PC-9 (cell line): ENCODE measurements at regions of chr6 and their contacts with region 1.

Region 1: DNA sequence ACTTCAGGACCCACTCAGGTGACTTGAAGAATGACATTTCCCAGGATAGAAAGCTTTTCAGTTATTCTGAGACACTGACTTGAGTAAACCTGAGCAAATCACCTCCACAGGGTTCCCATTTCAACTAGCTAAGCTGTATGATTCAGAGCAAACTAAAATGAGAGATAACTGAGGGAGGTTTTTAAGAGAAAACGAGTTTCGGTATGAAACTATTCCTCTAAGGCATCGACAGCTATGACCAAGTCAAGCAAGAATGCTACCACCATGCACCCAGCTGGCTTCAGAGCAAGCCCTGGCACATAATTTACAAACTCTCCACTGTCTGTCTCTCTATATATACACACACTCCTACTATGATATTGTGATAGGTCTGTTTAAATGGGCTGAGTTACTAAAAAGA is 75.4 kb downstream of the PERP start:
- DNase-seq: no peak
- H3K4me3 ChIP-seq: no peak overlapping the region
- H3K27ac ChIP-seq: no peak overlapping the region
- H3K4me1 ChIP-seq: peaks cover 32% of the 10 kb centered on the region
- H3K27me3 ChIP-seq: no peaks in the 10 kb centered on the region
- CTCF ChIP-seq: no peak

Region 2: DNA sequence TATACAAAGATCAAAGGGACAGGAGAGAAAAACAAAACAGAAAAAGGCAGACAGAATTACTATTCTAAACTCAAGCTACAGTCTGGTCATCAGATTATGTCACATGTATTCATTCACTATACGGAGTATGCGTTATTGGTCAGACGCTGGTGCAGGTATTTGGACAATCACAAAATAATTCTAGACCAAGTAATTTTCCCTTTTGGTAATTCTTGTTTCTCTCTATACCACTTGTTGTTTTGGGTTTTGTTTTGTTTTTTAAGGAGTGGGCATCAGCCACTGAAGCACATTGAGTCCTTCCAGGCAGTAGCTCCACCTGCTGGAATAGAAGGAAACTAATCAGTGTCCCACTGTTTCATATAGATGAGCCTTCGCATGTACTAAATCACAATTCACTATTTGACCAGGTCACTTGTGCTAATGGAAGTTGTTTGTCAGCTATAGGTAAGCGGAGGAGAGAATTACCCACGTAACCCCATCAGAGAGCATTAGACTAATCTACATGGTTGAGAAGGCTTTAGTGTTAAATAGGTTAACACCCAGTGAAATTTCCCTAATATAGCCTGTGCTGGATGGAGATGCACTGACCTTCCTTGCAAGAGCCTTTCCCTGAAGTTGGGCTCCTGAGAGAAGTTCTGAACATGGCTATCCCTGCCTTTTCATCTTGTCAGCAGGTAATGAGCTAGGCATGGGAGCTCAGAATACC is 86.9 kb before region 1 on chr6:
- CTCF ChIA-PET with region 1: no interaction called
- POLR2A ChIA-PET with region 1: no interaction called
- intact Hi-C with region 1: no loop called
- DNase-seq: no peak
- H3K4me3 ChIP-seq: no peak overlapping the region
- H3K27ac ChIP-seq: no peak overlapping the region
- H3K4me1 ChIP-seq: peaks cover 2% of the 10 kb centered on the region; the same call in 1 of the 2 replicates
- H3K27me3 ChIP-seq: no peaks in the 10 kb centered on the region
- CTCF ChIP-seq: peak; percentile 90

Region 3: GRCh38 chr6:138007014-138007472 is 24.8 kb before region 1 on chr6:
- CTCF ChIA-PET with region 1: no interaction called
- POLR2A ChIA-PET with region 1: no interaction called
- intact Hi-C with region 1: loop called (anchors 2 kb)
- DNase-seq: peak; percentile 38 to 45
- H3K4me3 ChIP-seq: no peak overlapping the region
- H3K27ac ChIP-seq: no peak overlapping the region
- H3K4me1 ChIP-seq: peaks cover 16% of the 10 kb centered on the region
- H3K27me3 ChIP-seq: no peaks in the 10 kb centered on the region
- CTCF ChIP-seq: peak; percentile 92

Region 4: GRCh38 chr6:138044458-138044857 is 12.6 kb after region 1 on chr6:
- CTCF ChIA-PET with region 1: interaction called, 15 read pairs
- POLR2A ChIA-PET with region 1: no interaction called
- intact Hi-C with region 1: no loop called
- DNase-seq: no peak
- H3K4me3 ChIP-seq: no peak overlapping the region
- H3K27ac ChIP-seq: no peak overlapping the region
- H3K4me1 ChIP-seq: no peaks in the 10 kb centered on the region
- H3K27me3 ChIP-seq: no peaks in the 10 kb centered on the region
- CTCF ChIP-seq: no peak

Region 5: DNA sequence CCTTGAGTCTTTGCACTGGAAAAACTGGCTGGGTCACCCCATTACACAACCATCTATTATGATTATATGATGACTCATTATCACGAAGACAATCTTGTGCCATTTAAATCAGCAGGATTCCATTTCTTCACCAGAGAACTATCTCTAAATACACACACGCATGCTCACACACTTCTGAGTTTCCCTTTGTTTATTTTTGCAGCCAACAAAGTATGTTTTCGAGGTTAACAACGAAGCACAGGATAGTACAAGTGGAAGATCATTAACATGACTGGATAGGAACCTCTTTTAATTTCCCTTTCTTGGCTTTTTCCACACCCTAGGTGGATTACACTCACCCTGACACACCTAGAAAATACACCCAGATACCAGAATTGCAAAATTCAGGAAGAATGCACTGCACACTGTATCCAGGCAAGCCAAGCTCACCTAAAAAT is 56.5 kb after region 1 on chr6:
- CTCF ChIA-PET with region 1: no interaction called
- POLR2A ChIA-PET with region 1: no interaction called
- intact Hi-C with region 1: loop called (anchors 1 kb)
- DNase-seq: peak; percentile 59 to 98
- H3K4me3 ChIP-seq: peak overlapping the region; percentile 38; the same call in 1 of the 2 replicates
- H3K27ac ChIP-seq: peak overlapping the region; percentile 92
- H3K4me1 ChIP-seq: peaks cover 61% of the 10 kb centered on the region
- H3K27me3 ChIP-seq: no peaks in the 10 kb centered on the region
- CTCF ChIP-seq: no peak

Region 6: DNA sequence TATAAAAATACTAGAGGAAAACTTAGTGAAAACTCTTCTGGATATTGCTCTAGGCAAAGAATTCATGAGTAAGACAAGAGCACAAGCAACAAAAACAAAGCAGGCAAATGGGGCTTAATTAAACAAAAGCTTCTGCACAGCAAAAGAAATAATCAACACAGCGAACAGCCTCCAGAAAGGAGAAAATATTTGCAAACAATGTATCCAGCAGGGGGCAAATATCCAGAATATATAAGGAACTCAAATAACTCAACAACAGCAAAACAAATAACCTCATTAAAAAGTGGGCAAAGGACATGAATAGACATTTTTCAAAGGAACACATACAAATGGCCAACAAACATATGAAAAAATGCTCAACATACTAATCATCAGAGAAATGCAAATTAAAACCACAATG is 1085.9 kb after region 1 on chr6:
- CTCF ChIA-PET with region 1: no interaction called
- POLR2A ChIA-PET with region 1: no interaction called
- intact Hi-C with region 1: no loop called
- DNase-seq: no peak
- H3K4me3 ChIP-seq: no peak overlapping the region
- H3K27ac ChIP-seq: no peak overlapping the region
- H3K4me1 ChIP-seq: no peaks in the 10 kb centered on the region; the same call in 1 of the 2 replicates
- H3K27me3 ChIP-seq: no peaks in the 10 kb centered on the region
- CTCF ChIP-seq: peak; percentile 58; the same call in 1 of the 2 replicates